ENCODE measurements at regions of chr16 and their contacts with region 1.

Region 1: DNA sequence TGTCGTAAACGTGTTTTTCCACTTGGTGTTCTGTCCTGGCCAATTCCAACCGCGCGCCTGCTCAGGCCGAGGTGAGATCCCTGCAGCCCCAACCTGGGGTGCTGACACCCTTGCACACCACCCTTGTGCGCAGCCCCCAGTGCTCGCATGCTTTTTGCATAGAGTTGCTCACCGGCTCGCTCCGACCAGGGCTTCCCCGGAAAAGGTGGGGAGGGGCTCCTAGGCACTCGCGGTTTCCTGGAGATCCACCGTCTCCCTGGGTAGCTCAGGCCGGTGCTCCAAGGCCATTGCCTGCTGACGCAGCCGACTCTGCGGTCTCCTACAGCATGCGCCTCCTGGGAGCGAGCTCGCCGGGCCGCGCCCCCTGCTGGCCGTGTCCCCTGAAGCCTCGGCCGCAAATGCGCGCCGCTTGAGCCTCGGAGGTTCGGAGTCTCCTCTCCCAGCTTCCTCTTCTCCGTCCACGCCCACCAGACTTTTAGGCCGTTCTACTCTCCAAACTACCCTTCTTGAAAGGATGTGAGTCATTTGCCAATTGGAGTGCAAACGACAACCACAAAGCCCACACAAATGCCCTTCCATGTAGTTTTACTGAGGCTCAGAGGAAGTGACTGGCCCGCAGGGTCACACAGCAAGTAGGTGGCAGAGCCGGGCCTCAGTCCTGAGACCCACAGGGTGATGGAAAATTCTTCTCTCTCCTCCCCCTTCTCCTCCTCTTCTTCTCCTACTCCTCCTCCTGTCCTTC is 7.2 kb upstream of the PDP2 start:
- DNase-seq: peak; percentile 89 to 92
- ATAC-seq: peak; percentile 94 to 98
- H3K4me3 ChIP-seq: peak overlapping the region; percentile 37
- H3K27ac ChIP-seq: peak overlapping the region; percentile 79 to 82
- H3K4me1 ChIP-seq: peaks cover 5% of the 10 kb centered on the region; the same call in 2 of the 3 replicates
- CTCF ChIP-seq: peak; percentile 93
- EP300 ChIP-seq: no peak
- POLR2A ChIP-seq: peak; percentile 56
- RAD21 ChIP-seq: peak; percentile 46 to 61

Region 2: DNA sequence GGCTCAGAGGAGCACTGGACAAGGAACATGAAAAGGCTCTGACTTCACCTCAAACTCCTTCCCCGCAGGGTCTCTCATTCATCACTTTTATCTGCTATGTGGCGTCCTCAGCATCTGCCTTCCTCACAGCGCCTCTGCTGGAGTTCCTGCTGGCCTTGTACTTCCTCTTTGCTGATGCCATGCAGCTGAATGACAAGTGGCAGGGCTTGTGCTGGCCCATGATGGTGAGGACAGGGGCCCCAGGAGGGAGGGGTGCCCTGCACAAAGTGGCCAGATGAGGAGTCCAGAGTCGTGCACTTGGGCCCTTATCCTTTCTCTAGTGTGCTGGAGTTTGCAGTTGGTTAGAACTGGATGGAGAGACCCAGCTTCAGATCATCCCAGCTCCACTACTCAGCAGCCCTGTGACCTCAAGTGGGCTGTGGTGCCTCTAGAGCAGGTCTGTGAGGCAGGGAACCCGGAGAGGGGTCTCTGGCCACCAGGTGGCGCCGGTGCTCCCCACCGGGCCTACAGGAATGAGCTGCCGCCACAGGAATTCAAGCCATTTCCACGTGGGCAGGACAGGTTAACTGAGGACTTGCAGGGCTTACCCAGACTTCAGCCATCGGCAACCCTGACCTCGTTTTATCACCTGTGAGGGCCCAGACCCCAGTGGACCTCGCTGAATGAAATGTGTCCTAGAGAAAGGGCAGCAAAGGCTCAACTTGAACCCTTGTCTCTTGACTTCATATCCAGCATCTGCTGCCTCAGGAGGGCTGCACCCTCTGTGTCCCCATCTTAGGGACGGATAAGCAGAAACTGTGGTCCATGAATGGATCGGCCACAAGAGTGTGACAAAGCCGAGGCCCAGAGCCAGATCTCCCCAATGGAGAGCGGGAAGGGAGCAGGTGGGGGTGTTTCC is 264.6 kb before region 1 on chr16:
- CTCF ChIA-PET with region 1: interaction called, 42 read pairs
- POLR2A ChIA-PET with region 1: interaction called, 3 read pairs
- DNase-seq: peak; percentile 85 to 94
- ATAC-seq: peak; percentile 56 to 76
- H3K4me3 ChIP-seq: no peak overlapping the region
- H3K27ac ChIP-seq: peak overlapping the region; percentile 19 to 86; a peak in 3 of 6 replicates
- H3K4me1 ChIP-seq: peaks cover 28% of the 10 kb centered on the region
- CTCF ChIP-seq: peak; percentile 90
- EP300 ChIP-seq: no peak
- POLR2A ChIP-seq: no peak
- RAD21 ChIP-seq: peak; percentile 67 to 70

Region 3: GRCh38 chr16:66660422-66661209 is 212.5 kb before region 1 on chr16:
- CTCF ChIA-PET with region 1: interaction called, 38 read pairs
- POLR2A ChIA-PET with region 1: interaction called, 7 read pairs
- DNase-seq: peak; percentile 72 to 84
- ATAC-seq: peak; percentile 96 to 97
- H3K4me3 ChIP-seq: peak overlapping the region; percentile 5; the same call in 1 of the 3 replicates
- H3K27ac ChIP-seq: peak overlapping the region; percentile 72 to 86
- H3K4me1 ChIP-seq: peaks cover 30% of the 10 kb centered on the region
- CTCF ChIP-seq: no peak
- EP300 ChIP-seq: no peak
- POLR2A ChIP-seq: no peak
- RAD21 ChIP-seq: 0 out of 5 replicates have a peak, but pooled peaks of 1 of the 2 experiments have one; percentile 24

Region 4: DNA sequence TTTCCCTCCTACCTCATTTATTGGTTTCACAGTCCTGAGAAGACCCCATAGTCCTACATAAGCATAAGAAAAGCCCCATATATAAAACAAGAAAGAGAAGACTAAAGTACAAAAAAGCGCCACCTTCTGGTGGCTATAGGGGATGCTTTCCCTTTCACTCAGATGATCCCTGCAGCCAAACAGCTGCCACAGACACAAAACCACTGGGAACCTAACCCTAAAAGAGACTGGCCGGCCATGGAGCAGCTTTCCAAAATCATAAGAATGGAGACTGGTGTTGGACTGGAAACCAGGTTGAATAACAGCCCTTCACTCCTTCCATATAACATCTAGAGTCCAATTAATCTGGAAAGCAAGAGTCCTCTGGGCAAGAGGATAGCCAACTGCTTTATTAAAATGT is 133.1 kb before region 1 on chr16:
- CTCF ChIA-PET with region 1: interaction called, 12 read pairs
- POLR2A ChIA-PET with region 1: interaction called, 3 read pairs
- DNase-seq: peak; percentile 51 to 80
- ATAC-seq: peak; percentile 67 to 78; a peak in 4 of 6 replicates
- H3K4me3 ChIP-seq: no peak overlapping the region
- H3K27ac ChIP-seq: peak overlapping the region; percentile 83 to 88
- H3K4me1 ChIP-seq: peaks cover 43% of the 10 kb centered on the region
- CTCF ChIP-seq: peak; percentile 63
- EP300 ChIP-seq: no peak
- POLR2A ChIP-seq: no peak
- RAD21 ChIP-seq: peak in 1 of 2 experiments; percentile 18; a peak in 2 of 5 replicates

Region 5: DNA sequence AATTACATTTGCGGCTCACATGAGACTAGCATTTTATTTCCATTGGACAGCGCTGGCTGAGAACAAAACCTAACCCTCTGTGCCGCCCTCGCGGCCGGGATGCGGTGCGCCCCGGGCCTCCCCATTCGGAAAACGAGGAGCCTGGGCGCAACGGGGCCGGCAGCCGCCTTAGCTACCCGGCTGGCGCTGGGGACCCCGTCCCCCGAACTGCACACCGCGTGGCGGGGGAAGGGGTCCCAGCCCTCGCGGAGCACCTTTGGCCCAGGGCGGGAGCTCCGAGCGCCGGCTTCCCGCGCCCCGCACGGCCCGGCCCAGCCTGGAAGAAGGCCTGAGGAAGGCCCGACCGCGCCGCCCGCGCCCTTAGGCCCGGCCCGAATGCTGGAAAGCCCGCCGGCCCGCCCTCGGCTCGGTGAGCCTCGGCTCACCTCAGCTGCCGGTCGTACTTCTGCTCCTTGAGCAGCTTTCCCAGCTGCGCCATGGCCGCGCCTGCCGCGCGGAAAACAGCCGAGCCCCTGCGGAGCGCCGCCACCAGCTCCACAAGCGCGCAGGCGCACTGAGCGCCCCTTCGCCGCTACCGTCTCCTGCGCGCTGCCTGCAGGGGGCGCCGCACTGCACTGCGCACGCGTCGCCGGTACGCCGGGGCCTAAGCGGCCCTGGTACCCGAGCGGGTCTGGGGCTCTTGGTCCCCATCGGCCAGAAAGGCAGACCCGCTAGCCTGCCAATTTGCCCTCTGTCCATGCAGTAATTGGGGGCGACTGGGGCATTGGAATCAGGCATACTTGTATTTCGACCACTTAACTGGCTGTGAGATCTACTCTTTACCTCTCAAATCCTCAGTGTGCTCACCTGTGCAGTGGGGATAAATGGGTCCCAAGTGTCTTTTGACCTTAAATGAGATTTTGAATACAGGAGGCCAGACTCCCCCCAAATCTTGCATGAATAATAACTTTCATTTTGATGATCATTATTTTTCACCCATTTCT is 42.4 kb before region 1 on chr16 and contains the start of gene NAE1:
- CTCF ChIA-PET with region 1: interaction called, 148 read pairs
- POLR2A ChIA-PET with region 1: interaction called, 8 read pairs
- DNase-seq: peak; percentile 84 to 91
- ATAC-seq: peak; percentile 92 to 98
- H3K4me3 ChIP-seq: peak within 1 kb of the TSS; percentile 88
- H3K27ac ChIP-seq: peak within 1 kb of the TSS; percentile 96 to 97
- H3K4me1 ChIP-seq: peaks cover 10% of the 10 kb centered on the region
- CTCF ChIP-seq: peak; percentile 97
- EP300 ChIP-seq: no peak
- POLR2A ChIP-seq: peak; percentile 90
- RAD21 ChIP-seq: peak; percentile 29 to 47; a peak in 3 of 5 replicates
- polyA plus RNA-seq, gene NAE1: 89.8 and 132 TPM in 2 replicates

Region 6: GRCh38 chr16:66858740-66859396 is 14.2 kb before region 1 on chr16:
- CTCF ChIA-PET with region 1: interaction called, 90 read pairs
- POLR2A ChIA-PET with region 1: interaction called, 6 read pairs
- DNase-seq: peak in 1 of 2 experiments; percentile 47
- ATAC-seq: peak; percentile 70 to 78
- H3K4me3 ChIP-seq: no peak overlapping the region
- H3K27ac ChIP-seq: peak overlapping the region in 1 of 2 experiments; percentile 25; a peak in 1 of 6 replicates
- H3K4me1 ChIP-seq: peaks cover 9% of the 10 kb centered on the region; the same call in 1 of the 3 replicates
- CTCF ChIP-seq: no peak
- EP300 ChIP-seq: no peak
- POLR2A ChIP-seq: no peak
- RAD21 ChIP-seq: no peak

Measured in A549 (cell line).